SK-N-SH (cell line): ENCODE measurements at regions of chr20 and their contacts with region 1.

Region 1: GRCh38 chr20:17636523-17637412 is 45.3 kb downstream of the RRBP1 start:
- DNase-seq: peak; percentile 91
- H3K4me3 ChIP-seq: no peak overlapping the region
- H3K27ac ChIP-seq: peak overlapping the region in 1 of 2 experiments; percentile 8; a peak in 1 of 4 replicates
- H3K4me1 ChIP-seq: peaks cover 0 to 20% of the 10 kb centered on the region in 2 experiments; a peak in 1 of 4 replicates
- H3K27me3 ChIP-seq: no peaks in the 10 kb centered on the region
- CTCF ChIP-seq: no peak
- EP300 ChIP-seq: no peak
- RAD21 ChIP-seq: peak; percentile 61

Region 2: GRCh38 chr20:17558154-17558940 is 78.4 kb before region 1 on chr20:
- CTCF ChIA-PET with region 1: no interaction called
- POLR2A ChIA-PET with region 1: no interaction called
- DNase-seq: no peak
- H3K4me3 ChIP-seq: peak overlapping the region; percentile 33 to 56; a peak in 3 of 4 replicates
- H3K27ac ChIP-seq: peak overlapping the region; percentile 84 to 100
- H3K4me1 ChIP-seq: peaks cover 7 to 16% of the 10 kb centered on the region in 2 experiments; a peak in 3 of 4 replicates
- H3K27me3 ChIP-seq: no peaks in the 10 kb centered on the region
- CTCF ChIP-seq: no peak
- EP300 ChIP-seq: peak in 1 of 2 experiments; percentile 62; a peak in 2 of 4 replicates
- RAD21 ChIP-seq: no peak

Region 3: GRCh38 chr20:17648791-17649730 is 12.3 kb after region 1 on chr20:
- CTCF ChIA-PET with region 1: interaction called, 12 read pairs
- POLR2A ChIA-PET with region 1: no interaction called
- DNase-seq: peak; percentile 53
- H3K4me3 ChIP-seq: no peak overlapping the region
- H3K27ac ChIP-seq: no peak overlapping the region
- H3K4me1 ChIP-seq: peaks cover 0 to 35% of the 10 kb centered on the region in 2 experiments; a peak in 1 of 4 replicates
- H3K27me3 ChIP-seq: no peaks in the 10 kb centered on the region
- CTCF ChIP-seq: peak; percentile 49
- EP300 ChIP-seq: no peak
- RAD21 ChIP-seq: no peak